ENCODE measurements at regions of chr1 and their contacts with region 1.

Region 1: GRCh38 chr1:150256554-150257341 is 826 bp upstream of the CA14 start:
- DNase-seq: no peak
- ATAC-seq: no peak
- H3K4me3 Mint-ChIP-seq: peak overlapping the region; percentile 63
- H3K27ac Mint-ChIP-seq: no peak overlapping the region
- H3K4me1 Mint-ChIP-seq: peaks cover 13% of the 10 kb centered on the region
- H3K27me3 Mint-ChIP-seq: peaks cover 30% of the 10 kb centered on the region
- CTCF ChIP-seq: no peak

Region 2: DNA sequence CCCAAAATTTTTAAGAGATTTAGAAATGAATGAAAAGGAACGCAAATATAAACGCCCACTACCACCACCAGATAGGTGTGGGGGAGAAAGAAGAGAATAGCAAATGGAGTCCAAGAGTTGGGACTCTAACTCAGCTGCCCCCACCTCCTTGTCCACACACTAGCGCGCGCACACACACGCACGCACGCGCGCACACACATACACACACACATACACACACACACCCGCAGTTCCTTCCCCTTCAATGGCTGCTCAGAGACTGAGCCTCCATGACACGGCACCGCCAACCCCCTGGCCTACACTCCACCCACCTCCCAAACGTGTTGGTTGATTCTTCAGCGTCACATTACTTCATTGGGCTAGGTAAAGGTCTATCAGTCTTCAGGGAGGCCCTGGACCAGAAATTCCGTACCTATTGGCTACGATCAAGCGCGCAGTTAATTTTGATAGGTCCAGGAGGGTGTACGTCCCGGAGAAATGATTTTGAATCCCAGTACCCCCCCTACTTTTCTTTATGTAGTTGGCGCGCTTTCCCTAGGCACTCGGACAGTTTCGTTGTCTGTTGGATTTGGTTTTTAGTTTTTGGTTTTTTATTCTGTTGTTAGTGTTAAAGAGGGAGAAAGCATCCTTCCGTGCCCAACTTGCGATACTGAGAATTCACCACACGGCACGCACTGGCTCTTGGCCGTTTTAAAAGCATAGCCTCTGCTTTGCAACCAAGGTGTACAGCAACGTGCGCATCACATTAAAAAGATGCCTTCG is 20.7 kb before region 1 on chr1 and contains the start of gene ANP32E:
- CTCF ChIA-PET with region 1: interaction called, 17 read pairs
- POLR2A ChIA-PET with region 1: interaction called, 6 read pairs
- intact Hi-C with region 1: no loop called
- DNase-seq: peak; percentile 96
- ATAC-seq: peak; percentile 87
- H3K4me3 Mint-ChIP-seq: no peak within 1 kb of the TSS
- H3K27ac Mint-ChIP-seq: no peak within 1 kb of the TSS
- H3K4me1 Mint-ChIP-seq: peaks cover 12% of the 10 kb centered on the region
- H3K27me3 Mint-ChIP-seq: no peaks in the 10 kb centered on the region
- CTCF ChIP-seq: no peak
- total RNA-seq, gene ANP32E: 174 to 185 TPM

Region 3: GRCh38 chr1:150281837-150282653 is 25.3 kb after region 1 on chr1 and contains the start of gene CIART:
- CTCF ChIA-PET with region 1: interaction called, 37 read pairs
- POLR2A ChIA-PET with region 1: interaction called, 5 read pairs
- intact Hi-C with region 1: no loop called
- DNase-seq: peak; percentile 87
- ATAC-seq: peak; percentile 90
- H3K4me3 Mint-ChIP-seq: peak within 1 kb of the TSS; percentile 80
- H3K27ac Mint-ChIP-seq: peak within 1 kb of the TSS; percentile 89
- H3K4me1 Mint-ChIP-seq: peaks cover 21% of the 10 kb centered on the region
- H3K27me3 Mint-ChIP-seq: no peaks in the 10 kb centered on the region
- CTCF ChIP-seq: no peak
- total RNA-seq, gene CIART: 3.6 to 5.1 TPM

Region 4: DNA sequence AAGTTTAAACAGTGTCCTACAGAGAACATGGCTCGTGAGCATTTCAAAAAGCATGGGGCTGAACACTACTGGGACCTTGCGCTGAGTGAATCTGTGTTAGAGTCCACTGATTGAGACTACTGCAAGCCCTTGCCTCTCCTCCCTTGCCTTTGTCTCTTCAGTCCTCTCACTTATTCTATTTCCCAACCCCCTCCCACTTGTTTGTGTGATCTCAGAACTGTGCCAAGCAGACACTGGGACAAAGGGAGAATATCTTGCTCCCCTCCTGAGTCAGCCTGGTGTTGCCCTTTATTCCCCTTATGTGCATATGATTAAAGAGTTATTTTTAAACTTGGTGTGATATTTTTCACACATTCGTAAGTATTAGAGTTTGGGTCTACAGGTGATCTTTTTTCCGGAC is 96.1 kb after region 1 on chr1:
- CTCF ChIA-PET with region 1: interaction called, 10 read pairs
- POLR2A ChIA-PET with region 1: no interaction called
- intact Hi-C with region 1: no loop called
- DNase-seq: no peak
- ATAC-seq: no peak
- H3K4me3 Mint-ChIP-seq: no peak overlapping the region
- H3K27ac Mint-ChIP-seq: no peak overlapping the region
- H3K4me1 Mint-ChIP-seq: no peaks in the 10 kb centered on the region
- H3K27me3 Mint-ChIP-seq: no peaks in the 10 kb centered on the region
- CTCF ChIP-seq: no peak

Region 5: GRCh38 chr1:150515328-150516048 is 258.7 kb after region 1 on chr1 and contains the start of gene FALEC:
- CTCF ChIA-PET with region 1: interaction called, 25 read pairs
- POLR2A ChIA-PET with region 1: no interaction called
- intact Hi-C with region 1: no loop called
- DNase-seq: peak; percentile 92
- ATAC-seq: peak; percentile 100
- H3K4me3 Mint-ChIP-seq: peak within 1 kb of the TSS; percentile 92
- H3K27ac Mint-ChIP-seq: peak within 1 kb of the TSS; percentile 64
- H3K4me1 Mint-ChIP-seq: peaks cover 12% of the 10 kb centered on the region
- H3K27me3 Mint-ChIP-seq: no peaks in the 10 kb centered on the region
- CTCF ChIP-seq: no peak
- total RNA-seq, gene FALEC: not detected